AG04450 (cell line): ENCODE measurements at regions of chr1 and their contacts with region 1.

Region 1: DNA sequence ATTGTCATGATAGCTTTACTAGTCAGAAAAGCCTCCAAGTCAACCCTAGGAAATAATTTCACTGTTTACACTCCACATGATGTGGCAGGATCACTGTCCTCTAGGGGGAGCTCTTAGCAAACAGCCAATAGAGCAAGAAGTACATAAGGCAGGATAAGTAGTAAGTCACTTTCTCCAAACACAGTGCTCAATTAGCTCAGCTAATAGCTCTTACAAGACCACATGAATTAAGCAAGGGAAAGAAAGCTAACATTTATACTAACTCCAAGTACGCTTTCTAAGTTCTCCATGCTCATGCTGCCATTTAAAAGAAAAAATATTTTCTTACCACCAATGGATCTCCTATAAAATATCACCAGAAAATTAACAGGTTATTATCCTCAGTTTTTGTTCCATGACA is 66.9 kb upstream of the LRIF1 start:
- DNase-seq: peak; percentile 18
- H3K4me3 ChIP-seq: no peak overlapping the region
- H3K27ac ChIP-seq: no peak overlapping the region
- H3K27me3 ChIP-seq: no peaks in the 10 kb centered on the region
- CTCF ChIP-seq: peak; percentile 92

Region 2: DNA sequence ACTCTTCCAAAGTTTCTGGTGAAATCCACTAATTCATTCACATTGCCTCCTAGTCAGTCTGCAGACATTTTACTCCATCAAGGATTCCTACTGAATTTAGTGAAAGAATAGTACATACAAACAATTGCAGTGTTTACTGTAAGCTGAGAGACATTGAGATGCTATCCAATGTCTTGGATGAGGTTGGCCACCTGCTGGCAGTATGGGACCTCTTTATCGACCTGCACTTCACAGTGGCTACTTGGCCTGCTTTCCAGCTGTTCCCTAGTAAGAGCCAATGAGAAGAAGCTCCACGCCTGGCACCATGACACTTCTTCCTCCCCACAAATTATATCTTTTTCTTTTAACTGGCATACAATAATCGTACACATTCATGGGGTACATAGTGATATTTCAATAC is 15.4 kb before region 1 on chr1:
- CTCF ChIA-PET with region 1: interaction called, 22 read pairs
- POLR2A ChIA-PET with region 1: no interaction called
- DNase-seq: no peak
- H3K4me3 ChIP-seq: no peak overlapping the region
- H3K27ac ChIP-seq: no peak overlapping the region
- H3K27me3 ChIP-seq: no peaks in the 10 kb centered on the region
- CTCF ChIP-seq: no peak

Region 3: GRCh38 chr1:111045033-111045722 is 14.6 kb after region 1 on chr1:
- CTCF ChIA-PET with region 1: interaction called, 30 read pairs
- POLR2A ChIA-PET with region 1: no interaction called
- DNase-seq: no peak
- H3K4me3 ChIP-seq: no peak overlapping the region
- H3K27ac ChIP-seq: no peak overlapping the region
- H3K27me3 ChIP-seq: no peaks in the 10 kb centered on the region
- CTCF ChIP-seq: no peak

Region 4: GRCh38 chr1:111197598-111198284 is 167.2 kb after region 1 on chr1:
- CTCF ChIA-PET with region 1: no interaction called
- POLR2A ChIA-PET with region 1: no interaction called
- DNase-seq: no peak
- H3K4me3 ChIP-seq: no peak overlapping the region
- H3K27ac ChIP-seq: no peak overlapping the region
- H3K27me3 ChIP-seq: peaks cover 6% of the 10 kb centered on the region
- CTCF ChIP-seq: peak; percentile 60

Region 5: DNA sequence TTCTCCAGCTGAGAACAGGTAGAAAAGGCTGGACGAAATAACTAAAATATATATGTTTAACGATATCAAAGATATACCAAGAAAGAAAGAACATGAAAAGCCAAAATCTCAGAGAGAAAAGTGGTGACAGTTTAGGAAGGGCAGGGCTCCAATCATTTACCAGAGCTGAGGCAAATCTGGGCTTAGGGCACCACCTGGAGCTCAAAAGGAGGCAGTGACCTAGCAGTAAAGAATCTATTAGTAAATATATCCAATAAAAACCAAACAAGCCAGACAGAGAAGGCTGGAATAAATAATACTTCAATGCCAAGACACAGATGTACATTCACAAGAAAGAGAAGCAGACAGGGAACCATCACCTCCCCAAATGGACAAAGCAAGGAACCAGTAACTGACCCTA is 303.6 kb after region 1 on chr1:
- CTCF ChIA-PET with region 1: interaction called, 25 read pairs
- POLR2A ChIA-PET with region 1: no interaction called
- DNase-seq: peak; percentile 11
- H3K4me3 ChIP-seq: no peak overlapping the region
- H3K27ac ChIP-seq: no peak overlapping the region
- H3K27me3 ChIP-seq: peaks cover 4% of the 10 kb centered on the region
- CTCF ChIP-seq: peak; percentile 68

Region 6: GRCh38 chr1:111346089-111346885 is 315.7 kb after region 1 on chr1:
- CTCF ChIA-PET with region 1: interaction called, 10 read pairs
- POLR2A ChIA-PET with region 1: no interaction called
- DNase-seq: peak; percentile 52
- H3K4me3 ChIP-seq: peak overlapping the region; percentile 72
- H3K27ac ChIP-seq: no peak overlapping the region
- H3K27me3 ChIP-seq: peaks cover 11% of the 10 kb centered on the region
- CTCF ChIP-seq: no peak; the same call in 1 of the 2 replicates

Region 7: DNA sequence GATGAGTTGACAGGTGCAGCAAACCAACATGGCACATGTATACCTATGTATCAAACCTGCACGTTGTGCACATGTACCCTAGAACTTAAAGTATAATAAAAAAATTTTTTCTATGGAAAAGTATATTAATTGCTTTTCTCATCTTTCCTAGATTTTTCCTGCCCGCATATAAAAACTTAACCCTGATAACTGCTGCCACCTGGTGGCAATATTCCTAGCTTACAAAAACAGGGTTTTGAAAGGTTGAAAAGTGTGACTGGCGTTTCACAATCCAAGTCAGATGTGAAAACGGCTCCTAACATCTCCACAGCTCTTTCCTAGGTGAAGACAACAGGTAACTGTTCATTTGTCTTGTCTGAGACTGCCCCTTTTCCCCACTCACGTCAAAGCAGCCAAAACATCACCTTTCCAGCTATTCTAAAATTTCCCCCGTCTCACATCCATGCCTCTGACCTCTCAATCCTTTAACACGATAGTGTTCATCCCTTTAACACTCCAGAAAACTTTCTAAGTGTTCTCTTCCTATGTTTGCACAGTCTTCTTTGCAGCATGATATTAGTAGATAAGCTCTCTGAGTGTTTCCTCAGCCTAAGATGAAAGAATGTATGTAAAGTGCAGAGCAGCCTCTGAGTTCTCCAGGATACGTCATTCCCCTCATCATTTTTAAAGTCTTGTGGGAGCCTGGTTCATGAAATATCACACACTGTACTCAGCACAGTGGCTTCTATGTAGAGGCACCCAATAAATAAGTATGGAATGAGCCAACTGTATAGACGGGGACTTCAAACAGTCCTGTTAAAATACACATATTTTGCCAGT is 369.4 kb after region 1 on chr1:
- CTCF ChIA-PET with region 1: interaction called, 21 read pairs
- POLR2A ChIA-PET with region 1: no interaction called
- DNase-seq: no peak
- H3K4me3 ChIP-seq: no peak overlapping the region
- H3K27ac ChIP-seq: no peak overlapping the region
- H3K27me3 ChIP-seq: peaks cover 33% of the 10 kb centered on the region
- CTCF ChIP-seq: peak; percentile 75